ENCODE measurements at regions of chr9 and their contacts with region 1.

Region 1: DNA sequence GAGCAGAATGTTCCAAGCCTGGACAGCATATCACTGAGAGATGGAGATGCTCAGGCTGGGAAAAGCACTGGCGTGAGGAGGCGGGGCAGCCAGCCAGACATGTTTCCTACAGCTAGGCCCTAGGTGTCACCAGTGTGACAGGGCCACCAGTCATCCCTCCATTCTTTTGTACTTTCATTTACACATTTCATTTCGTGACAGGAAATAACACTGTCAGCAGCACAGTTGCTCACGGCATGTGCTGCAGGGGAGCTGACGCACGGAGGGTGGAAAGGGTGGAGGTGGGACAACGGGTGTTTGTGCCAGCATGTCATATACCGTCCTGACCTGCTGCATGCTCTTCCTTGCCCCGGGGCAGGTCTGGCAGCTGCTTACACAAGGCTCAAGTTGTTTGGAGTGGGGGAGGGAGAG is 14.8 kb upstream of the CEMIP2 start:
- DNase-seq: peak; percentile 80
- H3K4me3 Mint-ChIP-seq: peak overlapping the region; percentile 63
- H3K27ac Mint-ChIP-seq: peak overlapping the region; percentile 93
- H3K4me1 Mint-ChIP-seq: peaks cover 42% of the 10 kb centered on the region
- H3K27me3 Mint-ChIP-seq: peaks cover 2% of the 10 kb centered on the region

Region 2: DNA sequence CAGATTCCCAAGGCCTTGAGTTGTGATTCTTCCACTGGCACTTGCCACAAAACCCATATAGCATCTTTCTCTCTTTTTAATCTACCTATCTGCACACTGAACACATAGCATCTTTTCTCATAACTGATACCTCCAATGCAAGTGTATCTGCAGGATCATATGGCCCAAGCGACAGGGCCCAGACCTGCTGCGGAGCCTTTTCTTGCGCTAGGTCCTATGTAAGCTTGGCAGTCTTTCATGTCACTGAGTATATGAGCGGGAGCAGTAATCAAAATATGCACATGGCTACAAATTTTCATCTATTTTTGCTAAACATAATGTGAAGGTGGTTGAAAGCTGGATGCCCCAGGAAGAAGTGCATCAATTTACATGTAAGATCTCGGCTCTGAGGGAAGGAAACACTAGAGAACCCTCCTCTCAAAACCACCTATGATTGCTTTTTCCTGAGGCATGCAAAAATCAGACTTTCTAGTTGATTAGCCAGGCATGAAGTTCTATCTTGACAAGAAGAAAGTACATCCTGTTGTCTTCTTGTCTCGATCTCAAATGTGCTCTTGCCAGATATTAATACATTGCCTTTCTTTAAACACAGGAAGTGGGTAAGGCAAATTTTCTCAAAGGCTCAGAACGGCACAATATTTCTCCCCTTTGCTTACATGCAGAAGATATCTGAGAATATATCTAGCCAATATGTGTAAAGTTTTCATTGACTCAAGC is 12.1 kb after region 1 on chr9:
- intact Hi-C with region 1: loop called (anchors 1 kb)
- DNase-seq: no peak
- H3K4me3 Mint-ChIP-seq: peak overlapping the region; percentile 57
- H3K27ac Mint-ChIP-seq: peak overlapping the region; percentile 88
- H3K4me1 Mint-ChIP-seq: peaks cover 32% of the 10 kb centered on the region
- H3K27me3 Mint-ChIP-seq: no peaks in the 10 kb centered on the region

Region 3: DNA sequence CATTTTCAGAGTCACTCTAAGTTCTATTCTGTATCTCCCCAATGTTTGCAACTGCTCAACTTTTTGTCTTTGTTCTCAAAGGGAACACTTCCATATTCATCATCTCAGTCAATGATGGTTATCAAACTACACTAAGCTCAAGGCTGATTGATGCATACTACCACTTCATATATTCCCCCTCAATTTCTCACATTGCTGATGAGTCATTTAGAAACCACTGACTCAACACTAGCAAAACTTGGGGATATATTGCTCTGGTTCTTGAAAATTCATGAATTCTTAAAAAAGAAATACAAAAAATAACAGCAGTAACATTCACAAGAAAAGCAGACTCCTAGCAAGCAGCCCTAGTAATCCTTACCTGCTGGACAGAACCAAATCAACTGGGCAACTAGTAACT is 75.7 kb after region 1 on chr9:
- intact Hi-C with region 1: loop called (anchors 2 kb)
- DNase-seq: peak; percentile 3
- H3K4me3 Mint-ChIP-seq: peak overlapping the region; percentile 0
- H3K27ac Mint-ChIP-seq: peak overlapping the region; percentile 51
- H3K4me1 Mint-ChIP-seq: peaks cover 25% of the 10 kb centered on the region
- H3K27me3 Mint-ChIP-seq: no peaks in the 10 kb centered on the region

Region 4: DNA sequence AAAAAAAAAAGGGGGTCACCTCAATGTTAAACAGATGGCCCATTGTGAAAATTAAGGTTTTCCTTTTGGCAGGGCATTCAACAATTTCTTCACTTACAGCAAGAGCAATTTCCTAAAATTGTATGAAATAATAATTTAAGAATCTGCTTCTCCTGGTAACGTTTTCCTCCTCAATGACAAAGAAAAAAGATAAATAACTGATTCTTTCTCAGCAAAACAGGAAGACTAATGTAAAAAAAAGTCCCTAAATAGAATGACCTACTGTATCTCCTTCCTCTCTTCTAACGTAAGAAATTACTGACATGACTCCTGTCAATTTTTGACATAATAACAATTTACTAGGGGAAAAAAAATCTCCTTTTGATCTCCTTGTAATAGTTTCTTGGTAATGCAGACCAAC is 102.3 kb after region 1 on chr9:
- intact Hi-C with region 1: loop called (anchors 1 kb)
- DNase-seq: no peak
- H3K4me3 Mint-ChIP-seq: peak overlapping the region; percentile 12
- H3K27ac Mint-ChIP-seq: peak overlapping the region; percentile 71
- H3K4me1 Mint-ChIP-seq: peaks cover 39% of the 10 kb centered on the region
- H3K27me3 Mint-ChIP-seq: no peaks in the 10 kb centered on the region

Measured in activated T-helper 1 cell treated with anti-CD3 and anti-CD28 coated beads, Interleukin-12 subunit alpha, Interleukin-12 subunit beta, Interleukin-2, Interleukin-4 antibody, amounts not matched to agents 30 ng/mL and 10 ng/mL and 1 ng/mL, durations not matched to agents 14 hours and 24 hours and 36 hours (primary cell).